Mammary epithelial cell (primary cell): ENCODE measurements at regions of chr19 and their contacts with region 1.

Region 1: GRCh38 chr19:9070066-9070465 is 16.8 kb upstream of the OR1M1 start:
- DNase-seq: no peak
- H3K4me3 ChIP-seq: no peak overlapping the region
- H3K27ac ChIP-seq: no peak overlapping the region
- H3K4me1 ChIP-seq: peaks cover 5% of the 10 kb centered on the region
- H3K27me3 ChIP-seq: no peaks in the 10 kb centered on the region
- CTCF ChIP-seq: no peak

Region 2: GRCh38 chr19:8663920-8664670 is 406.0 kb before region 1 on chr19:
- CTCF ChIA-PET with region 1: interaction called, 18 read pairs
- dilution Hi-C with region 1: no loop called
- in situ Hi-C with region 1: loop called (anchors 5 to 10 kb)
- intact Hi-C with region 1: no loop called
- DNase-seq: no peak
- H3K4me3 ChIP-seq: no peak overlapping the region
- H3K27ac ChIP-seq: no peak overlapping the region
- H3K4me1 ChIP-seq: no peaks in the 10 kb centered on the region
- H3K27me3 ChIP-seq: no peaks in the 10 kb centered on the region
- CTCF ChIP-seq: no peak

Region 3: GRCh38 chr19:9115307-9115813 is 45.3 kb after region 1 on chr19 and contains the start of gene OR7G1:
- CTCF ChIA-PET with region 1: no interaction called
- dilution Hi-C with region 1: no loop called
- in situ Hi-C with region 1: no loop called
- intact Hi-C with region 1: no loop called
- DNase-seq: no peak
- H3K4me3 ChIP-seq: no peak within 1 kb of the TSS
- H3K27ac ChIP-seq: no peak within 1 kb of the TSS
- H3K4me1 ChIP-seq: no peaks in the 10 kb centered on the region
- H3K27me3 ChIP-seq: no peaks in the 10 kb centered on the region
- CTCF ChIP-seq: no peak
- total RNA-seq, gene OR7G1: not detected